Body of pancreas (tissue), 4 donors: ENCODE measurements at regions of chr20 and their contacts with region 1.

Region 1: GRCh38 chr20:52312132-52312729 is 120.7 kb upstream of the ZFP64 start:
- DNase-seq: peak; percentile 41 to 57 (median 50)
- ATAC-seq: no peak
- H3K4me3 ChIP-seq: no peak overlapping the region
- H3K27ac ChIP-seq: no peak overlapping the region
- H3K4me1 ChIP-seq: peaks cover 5% of the 10 kb centered on the region
- H3K27me3 ChIP-seq: no peaks in the 10 kb centered on the region
- CTCF ChIP-seq: peak; percentile 59 to 78 (median 61)
- POLR2A ChIP-seq: no peak

Region 2: DNA sequence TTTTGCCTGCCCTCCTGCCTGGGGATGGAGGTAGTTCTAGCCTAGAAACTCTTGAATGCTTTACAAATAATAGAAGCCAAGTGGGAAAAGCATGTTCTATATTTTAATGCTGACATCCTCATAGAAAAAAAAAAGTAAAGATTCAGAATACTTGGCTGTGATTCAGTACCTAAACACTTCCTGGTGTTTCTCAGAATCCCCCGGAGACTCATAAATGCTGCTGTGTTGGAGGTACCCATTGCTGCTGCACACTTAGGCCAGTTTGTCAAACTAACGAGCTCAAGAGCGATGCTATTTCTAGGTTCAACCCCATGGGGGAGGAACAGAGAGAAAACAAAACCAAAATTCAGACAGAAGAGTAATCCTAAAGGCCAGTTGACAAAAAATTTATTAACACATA is 81.8 kb before region 1 on chr20:
- intact Hi-C with region 1: no loop called
- DNase-seq: no peak
- ATAC-seq: no peak
- H3K4me3 ChIP-seq: no peak overlapping the region
- H3K27ac ChIP-seq: no peak overlapping the region
- H3K4me1 ChIP-seq: peaks cover 7% of the 10 kb centered on the region
- H3K27me3 ChIP-seq: no peaks in the 10 kb centered on the region
- CTCF ChIP-seq: no peak
- POLR2A ChIP-seq: no peak

Region 3: DNA sequence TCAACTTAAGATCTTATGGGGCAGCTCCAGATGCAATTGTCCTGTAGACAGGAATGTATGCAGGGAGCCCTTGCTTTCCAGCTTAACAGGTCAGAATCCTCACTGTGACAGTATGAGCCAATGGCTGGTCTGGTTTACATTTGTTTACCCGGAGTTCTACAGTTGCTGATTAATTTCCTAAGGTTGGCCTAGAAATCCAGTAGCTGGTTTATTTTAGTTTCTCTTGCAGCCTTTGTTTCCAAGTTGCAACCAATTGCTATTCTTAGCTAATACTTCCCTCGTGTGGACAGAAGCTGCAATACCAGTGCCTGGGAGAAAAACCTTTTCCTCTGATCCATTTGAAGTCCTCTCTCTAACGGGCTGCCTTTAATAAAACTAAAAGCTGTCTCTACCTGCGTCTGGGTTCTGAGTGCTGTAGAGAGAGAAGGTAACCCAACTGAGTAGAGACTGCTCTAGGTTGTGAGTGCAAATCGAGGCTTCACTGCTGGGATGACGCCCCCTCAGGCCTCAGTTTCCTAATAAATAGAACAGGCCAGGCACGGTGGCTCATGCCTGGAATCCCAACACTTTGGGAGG is 1235.5 kb after region 1 on chr20:
- intact Hi-C with region 1: loop called (anchors 10 kb)
- DNase-seq: peak; percentile 36 to 49 (median 44)
- ATAC-seq: peak; percentile 75
- H3K4me3 ChIP-seq: no peak overlapping the region
- H3K27ac ChIP-seq: no peak overlapping the region
- H3K4me1 ChIP-seq: no peaks in the 10 kb centered on the region
- H3K27me3 ChIP-seq: no peaks in the 10 kb centered on the region
- CTCF ChIP-seq: peak; percentile 63 to 90 (median 78)
- POLR2A ChIP-seq: no peak